PC-3 (cell line): ENCODE measurements at regions of chr1 and their contacts with region 1.

Region 1: GRCh38 chr1:150515328-150516048 is at the start of gene FALEC:
- DNase-seq: peak; percentile 99
- ATAC-seq: peak; percentile 97
- H3K4me3 ChIP-seq: peak within 1 kb of the TSS; percentile 71
- H3K27ac ChIP-seq: no peak within 1 kb of the TSS
- H3K4me1 ChIP-seq: peaks cover 11% of the 10 kb centered on the region
- H3K27me3 ChIP-seq: no peaks in the 10 kb centered on the region
- CTCF ChIP-seq: no peak
- total RNA-seq, gene FALEC: 0.73 TPM in 1 of 2 replicates, not detected in the other

Region 2: DNA sequence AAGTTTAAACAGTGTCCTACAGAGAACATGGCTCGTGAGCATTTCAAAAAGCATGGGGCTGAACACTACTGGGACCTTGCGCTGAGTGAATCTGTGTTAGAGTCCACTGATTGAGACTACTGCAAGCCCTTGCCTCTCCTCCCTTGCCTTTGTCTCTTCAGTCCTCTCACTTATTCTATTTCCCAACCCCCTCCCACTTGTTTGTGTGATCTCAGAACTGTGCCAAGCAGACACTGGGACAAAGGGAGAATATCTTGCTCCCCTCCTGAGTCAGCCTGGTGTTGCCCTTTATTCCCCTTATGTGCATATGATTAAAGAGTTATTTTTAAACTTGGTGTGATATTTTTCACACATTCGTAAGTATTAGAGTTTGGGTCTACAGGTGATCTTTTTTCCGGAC is 162.6 kb before region 1 on chr1:
- CTCF ChIA-PET with region 1: interaction called, 16 read pairs
- POLR2A ChIA-PET with region 1: no interaction called
- intact Hi-C with region 1: no loop called
- DNase-seq: no peak
- ATAC-seq: no peak
- H3K4me3 ChIP-seq: no peak overlapping the region
- H3K27ac ChIP-seq: no peak overlapping the region
- H3K4me1 ChIP-seq: no peaks in the 10 kb centered on the region
- H3K27me3 ChIP-seq: no peaks in the 10 kb centered on the region
- CTCF ChIP-seq: no peak

Region 3: GRCh38 chr1:150820710-150821512 is 305.4 kb after region 1 on chr1:
- CTCF ChIA-PET with region 1: no interaction called
- POLR2A ChIA-PET with region 1: interaction called, 10 read pairs
- intact Hi-C with region 1: no loop called
- DNase-seq: peak; percentile 74
- ATAC-seq: peak; percentile 100
- H3K4me3 ChIP-seq: no peak overlapping the region
- H3K27ac ChIP-seq: no peak overlapping the region
- H3K4me1 ChIP-seq: peaks cover 15% of the 10 kb centered on the region
- H3K27me3 ChIP-seq: no peaks in the 10 kb centered on the region
- CTCF ChIP-seq: no peak

Region 4: GRCh38 chr1:151461694-151462093 is 946.2 kb after region 1 on chr1:
- CTCF ChIA-PET with region 1: no interaction called
- POLR2A ChIA-PET with region 1: no interaction called
- intact Hi-C with region 1: no loop called
- DNase-seq: no peak
- ATAC-seq: no peak
- H3K4me3 ChIP-seq: no peak overlapping the region
- H3K27ac ChIP-seq: no peak overlapping the region
- H3K4me1 ChIP-seq: peaks cover 12% of the 10 kb centered on the region
- H3K27me3 ChIP-seq: no peaks in the 10 kb centered on the region
- CTCF ChIP-seq: no peak